Activated CD4-positive, alpha-beta T cell treated with anti-CD3 and anti-CD28 coated beads for 36 hours (primary cell): ENCODE measurements at regions of chr11 and their contacts with region 1.

Region 1: GRCh38 chr11:12331239-12331874 is 46.0 kb upstream of the PARVA start:
- DNase-seq: peak; percentile 85
- ATAC-seq: peak; percentile 36
- H3K4me3 Mint-ChIP-seq: no peak overlapping the region
- H3K27ac Mint-ChIP-seq: no peak overlapping the region
- H3K4me1 Mint-ChIP-seq: peaks cover 3% of the 10 kb centered on the region
- H3K27me3 Mint-ChIP-seq: no peaks in the 10 kb centered on the region

Region 2: DNA sequence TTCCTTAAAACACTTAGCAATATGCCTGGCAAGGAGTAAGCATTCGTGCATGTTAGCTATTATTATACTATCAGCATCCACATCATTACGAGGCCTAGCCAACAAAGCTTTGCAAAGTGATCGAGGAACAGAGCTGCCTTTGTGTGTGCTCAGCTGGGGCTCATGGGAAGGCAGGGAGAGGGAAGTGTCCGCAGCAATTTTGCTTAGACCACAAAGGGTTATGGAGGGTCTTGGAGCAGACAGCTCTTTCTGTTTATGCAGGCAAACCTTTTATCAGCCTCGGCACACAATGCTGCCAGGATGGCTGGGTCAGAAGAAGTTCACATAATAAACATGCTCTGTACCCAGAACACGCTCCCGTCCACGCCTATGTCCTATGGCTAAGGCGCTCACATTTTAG is 312.0 kb before region 1 on chr11:
- CTCF ChIA-PET with region 1: no interaction called
- POLR2A ChIA-PET with region 1: no interaction called
- intact Hi-C with region 1: no loop called
- DNase-seq: no peak
- ATAC-seq: no peak
- H3K4me3 Mint-ChIP-seq: no peak overlapping the region
- H3K27ac Mint-ChIP-seq: no peak overlapping the region
- H3K4me1 Mint-ChIP-seq: no peaks in the 10 kb centered on the region
- H3K27me3 Mint-ChIP-seq: peaks cover 20% of the 10 kb centered on the region

Region 3: GRCh38 chr11:12343526-12343925 is 12.2 kb after region 1 on chr11:
- CTCF ChIA-PET with region 1: interaction called, 14 read pairs
- POLR2A ChIA-PET with region 1: no interaction called
- intact Hi-C with region 1: no loop called
- DNase-seq: no peak
- ATAC-seq: no peak
- H3K4me3 Mint-ChIP-seq: no peak overlapping the region
- H3K27ac Mint-ChIP-seq: no peak overlapping the region
- H3K4me1 Mint-ChIP-seq: no peaks in the 10 kb centered on the region
- H3K27me3 Mint-ChIP-seq: no peaks in the 10 kb centered on the region

Region 4: DNA sequence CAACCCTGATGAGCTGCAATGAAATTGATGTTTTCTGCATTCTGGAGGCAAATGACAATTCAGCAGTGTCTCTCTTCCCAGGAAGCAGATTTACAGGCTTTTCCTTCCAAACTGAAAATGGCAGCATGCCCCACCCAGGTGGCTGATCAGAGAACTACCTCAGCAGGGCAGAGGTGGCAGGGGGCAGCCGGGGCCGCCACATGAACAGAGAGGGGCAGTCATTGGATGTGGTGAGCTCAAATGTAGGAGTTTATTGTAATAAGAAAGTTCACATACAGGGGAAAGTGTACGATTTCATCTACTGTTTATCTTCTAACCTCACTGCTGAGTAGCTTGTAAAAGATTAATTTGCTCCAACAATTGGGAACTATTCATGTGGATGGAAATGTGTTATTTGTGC is 30.3 kb after region 1 on chr11:
- CTCF ChIA-PET with region 1: interaction called, 10 read pairs
- POLR2A ChIA-PET with region 1: no interaction called
- intact Hi-C with region 1: no loop called
- DNase-seq: no peak
- ATAC-seq: no peak
- H3K4me3 Mint-ChIP-seq: no peak overlapping the region
- H3K27ac Mint-ChIP-seq: no peak overlapping the region
- H3K4me1 Mint-ChIP-seq: peaks cover 57% of the 10 kb centered on the region
- H3K27me3 Mint-ChIP-seq: no peaks in the 10 kb centered on the region

Region 5: GRCh38 chr11:12599408-12600143 is 268.2 kb after region 1 on chr11:
- CTCF ChIA-PET with region 1: interaction called, 9 read pairs
- POLR2A ChIA-PET with region 1: no interaction called
- intact Hi-C with region 1: loop called in 1 of 2 experiments (anchors 5 kb)
- DNase-seq: peak; percentile 74
- ATAC-seq: peak; percentile 76
- H3K4me3 Mint-ChIP-seq: no peak overlapping the region
- H3K27ac Mint-ChIP-seq: no peak overlapping the region
- H3K4me1 Mint-ChIP-seq: peaks cover 15% of the 10 kb centered on the region
- H3K27me3 Mint-ChIP-seq: peaks cover 19% of the 10 kb centered on the region

Region 6: DNA sequence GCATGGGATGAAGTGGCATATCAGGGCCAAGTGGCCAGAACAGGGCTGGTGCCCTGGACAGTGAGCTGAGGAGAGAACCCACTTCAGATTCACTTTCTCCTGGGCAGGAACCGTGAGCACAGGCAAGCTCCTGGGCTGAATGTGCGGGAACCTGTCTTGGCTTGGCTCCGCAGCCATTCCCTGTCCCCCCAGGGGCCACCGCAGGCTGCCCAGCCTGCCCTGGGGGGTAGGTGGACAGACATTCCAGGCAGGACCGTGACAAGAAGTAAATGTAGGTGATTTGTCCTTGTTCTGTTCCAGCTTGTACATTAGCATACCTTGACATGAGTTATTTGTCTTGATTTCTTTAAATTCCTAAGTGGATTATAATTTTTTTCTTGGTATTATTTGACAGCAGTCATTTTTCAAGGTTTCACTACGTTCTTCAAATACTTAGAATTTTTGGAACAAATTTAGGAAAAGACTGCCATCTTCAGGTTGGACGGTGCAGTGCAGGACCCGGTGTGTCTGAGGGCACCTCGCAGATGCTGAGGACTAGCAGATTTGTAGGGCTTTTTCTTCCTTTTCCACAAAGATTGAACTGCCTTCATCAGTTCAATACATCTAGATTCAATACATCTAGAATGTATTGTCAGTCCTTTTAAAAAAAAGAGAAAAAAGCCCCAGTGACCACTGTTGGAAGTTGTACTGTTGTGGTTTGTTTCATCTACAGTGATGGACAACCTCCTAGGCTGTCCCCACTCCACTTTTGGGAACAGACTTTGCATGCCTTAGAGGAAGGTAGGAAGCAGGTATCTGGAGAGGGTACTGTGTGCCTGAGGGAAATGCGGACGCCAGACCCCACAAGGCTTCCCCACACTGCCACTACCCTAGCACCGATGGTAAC is 562.7 kb after region 1 on chr11:
- CTCF ChIA-PET with region 1: interaction called, 49 read pairs
- POLR2A ChIA-PET with region 1: no interaction called
- intact Hi-C with region 1: loop called (anchors 1 kb)
- DNase-seq: peak; percentile 79
- ATAC-seq: no peak
- H3K4me3 Mint-ChIP-seq: no peak overlapping the region
- H3K27ac Mint-ChIP-seq: no peak overlapping the region
- H3K4me1 Mint-ChIP-seq: no peaks in the 10 kb centered on the region
- H3K27me3 Mint-ChIP-seq: peaks cover 14% of the 10 kb centered on the region

Region 7: DNA sequence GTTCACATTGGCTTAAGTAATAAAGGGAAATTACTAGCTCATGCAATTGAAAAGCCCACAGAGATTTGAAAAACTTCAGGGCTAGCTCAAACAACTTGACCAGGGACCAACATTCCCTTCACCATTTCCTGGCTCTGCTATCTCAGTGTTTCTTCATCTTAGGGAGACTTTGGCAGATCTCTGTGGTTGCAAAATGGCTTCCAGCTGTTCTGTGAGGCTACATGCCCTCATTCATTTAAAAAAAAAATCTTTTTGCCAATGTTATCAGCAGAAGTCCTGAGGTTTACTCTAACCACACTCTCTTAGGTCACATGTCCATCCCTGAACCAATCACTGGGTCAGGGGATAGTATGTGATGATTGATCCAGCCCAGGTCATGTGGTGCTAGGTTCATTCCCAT is 663.8 kb after region 1 on chr11:
- CTCF ChIA-PET with region 1: no interaction called
- POLR2A ChIA-PET with region 1: no interaction called
- intact Hi-C with region 1: no loop called
- DNase-seq: no peak
- ATAC-seq: no peak
- H3K4me3 Mint-ChIP-seq: no peak overlapping the region
- H3K27ac Mint-ChIP-seq: no peak overlapping the region
- H3K4me1 Mint-ChIP-seq: no peaks in the 10 kb centered on the region
- H3K27me3 Mint-ChIP-seq: peaks cover 7% of the 10 kb centered on the region